Spleen (tissue), 13 donors: ENCODE measurements at regions of chr16 and their contacts with region 1.

Region 1: DNA sequence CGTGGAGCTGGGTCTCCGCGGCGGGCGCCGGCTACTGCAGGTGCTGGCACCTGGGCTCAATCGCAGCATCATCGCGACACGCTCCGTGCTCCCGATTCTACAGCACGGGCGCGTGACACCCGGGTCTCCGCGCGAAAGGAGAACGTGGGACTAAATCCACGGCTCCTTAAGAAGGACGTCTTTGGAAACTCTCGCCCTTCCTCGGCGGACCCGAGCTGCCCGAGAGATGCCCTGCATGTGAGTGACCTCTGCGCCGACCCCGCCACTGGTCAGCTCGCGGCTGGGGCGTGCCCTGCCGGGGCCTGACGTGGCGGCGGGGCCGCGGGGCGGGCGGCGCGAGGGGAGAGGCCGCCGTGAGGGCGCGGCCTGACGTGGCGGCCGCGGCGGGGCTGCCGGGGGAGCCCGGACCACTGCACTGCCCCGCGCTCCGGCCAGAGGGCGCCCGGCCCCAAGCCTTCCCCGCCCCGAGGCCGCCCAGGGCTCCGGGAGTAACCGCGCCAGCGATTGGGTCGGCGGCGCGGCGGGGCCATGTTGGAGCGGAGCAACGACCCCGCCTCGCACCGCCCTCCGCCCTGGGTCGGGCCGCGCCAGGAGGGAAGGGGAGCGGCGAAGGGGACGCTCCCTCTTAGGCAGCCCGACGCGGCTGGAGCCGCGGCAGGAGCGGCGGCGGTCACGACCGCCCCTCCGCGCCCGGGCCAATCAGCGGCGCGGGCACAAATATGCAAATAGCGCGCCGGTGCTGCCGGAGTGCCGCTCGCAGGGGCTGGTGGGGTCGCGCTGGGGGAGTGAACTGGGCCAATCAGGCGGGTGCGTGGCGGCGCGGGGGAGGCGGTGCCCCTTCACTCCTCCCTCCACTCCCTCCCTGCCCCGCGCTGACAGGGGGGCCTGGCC is 75.6 kb downstream of the CHD9 start:
- DNase-seq: peak; percentile 99
- H3K4me3 ChIP-seq: peak overlapping the region; percentile 61 to 94 (median 86)
- H3K27ac ChIP-seq: peak overlapping the region; percentile 85 to 98 (median 96)
- H3K4me1 ChIP-seq: peaks cover 0 to 56% (median 25%) of the 10 kb centered on the region in 6 donors
- H3K27me3 ChIP-seq: no peaks in the 10 kb centered on the region
- CTCF ChIP-seq: peak in 10 of 11 experiments; percentile 9 to 88 (median 72)
- POLR2A ChIP-seq: peak in 1 of 3 donors; percentile 17

Region 2: GRCh38 chr16:52993179-52993578 is 137.2 kb before region 1 on chr16:
- intact Hi-C with region 1: no loop called
- DNase-seq: no peak
- H3K4me3 ChIP-seq: no peak overlapping the region
- H3K27ac ChIP-seq: no peak overlapping the region
- H3K4me1 ChIP-seq: no peaks in the 10 kb centered on the region
- H3K27me3 ChIP-seq: no peaks in the 10 kb centered on the region
- CTCF ChIP-seq: no peak
- POLR2A ChIP-seq: no peak

Region 3: DNA sequence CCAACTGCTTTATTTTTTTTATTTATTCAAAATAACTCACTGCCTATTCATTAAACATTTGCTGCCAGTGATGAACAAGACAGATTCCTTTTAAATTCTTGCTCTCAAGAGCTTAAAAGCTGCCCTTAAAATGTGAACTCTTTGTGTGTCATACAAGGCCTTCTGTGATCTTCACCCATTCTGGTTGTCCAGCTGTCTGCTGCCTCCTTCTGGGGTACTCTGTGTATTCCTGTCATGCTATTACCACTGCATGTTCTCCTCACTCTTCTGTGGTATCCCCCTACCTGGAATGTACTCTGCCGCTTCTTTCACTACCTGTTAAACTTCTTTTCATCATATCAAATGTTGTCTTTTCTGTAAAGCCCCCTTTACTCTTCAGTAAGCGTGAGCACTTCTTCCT is 90.2 kb after region 1 on chr16:
- intact Hi-C with region 1: loop called (anchors 10 kb)
- DNase-seq: no peak
- H3K4me3 ChIP-seq: no peak overlapping the region
- H3K27ac ChIP-seq: peak overlapping the region in 7 of 8 donors; percentile 52 to 79 (median 77)
- H3K4me1 ChIP-seq: peaks cover 24 to 83% (median 60%) of the 10 kb centered on the region in 6 donors
- H3K27me3 ChIP-seq: no peaks in the 10 kb centered on the region
- CTCF ChIP-seq: peak in 6 of 11 experiments; percentile 18 to 40 (median 22)
- POLR2A ChIP-seq: no peak